A673 (cell line): ENCODE measurements at regions of chr7 and their contacts with region 1.

Region 1: GRCh38 chr7:107387128-107387527 is 82.7 kb upstream of the GPR22 start:
- DNase-seq: no peak
- H3K4me3 ChIP-seq: no peak overlapping the region
- H3K27ac ChIP-seq: no peak overlapping the region
- H3K4me1 ChIP-seq: no peaks in the 10 kb centered on the region
- H3K27me3 ChIP-seq: no peaks in the 10 kb centered on the region
- CTCF ChIP-seq: no peak

Region 2: GRCh38 chr7:107372298-107372697 is 14.8 kb before region 1 on chr7:
- CTCF ChIA-PET with region 1: no interaction called
- POLR2A ChIA-PET with region 1: no interaction called
- intact Hi-C with region 1: loop called (anchors 1 kb)
- DNase-seq: no peak
- H3K4me3 ChIP-seq: no peak overlapping the region
- H3K27ac ChIP-seq: no peak overlapping the region
- H3K4me1 ChIP-seq: no peaks in the 10 kb centered on the region
- H3K27me3 ChIP-seq: no peaks in the 10 kb centered on the region
- CTCF ChIP-seq: no peak

Region 3: DNA sequence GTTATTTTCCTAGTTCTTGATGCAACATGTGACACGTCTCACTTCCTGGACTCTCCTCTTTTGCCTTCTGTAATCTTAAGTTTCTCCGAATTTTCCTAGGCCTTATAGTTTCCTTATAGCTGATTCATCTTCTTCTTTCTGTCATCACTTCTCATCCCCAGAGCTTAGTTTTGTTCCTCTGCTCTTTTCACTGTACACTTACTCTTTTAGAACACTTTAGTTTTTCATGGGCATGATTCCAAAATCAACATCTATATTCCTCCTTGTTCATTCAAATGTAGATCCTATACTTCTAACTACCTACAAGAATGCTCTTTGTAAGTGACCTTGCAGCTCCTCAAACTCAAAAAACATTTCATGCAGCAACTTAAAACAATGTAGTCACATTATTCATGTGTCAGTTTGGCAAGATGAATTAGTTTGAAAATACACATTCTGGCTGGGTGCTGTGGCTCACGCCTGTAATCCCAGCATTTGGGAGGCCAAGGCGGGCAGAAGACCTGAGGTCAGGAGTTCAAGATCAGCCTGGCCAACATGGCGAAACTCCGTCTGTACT is 429.0 kb after region 1 on chr7:
- CTCF ChIA-PET with region 1: no interaction called
- POLR2A ChIA-PET with region 1: interaction called, 10 read pairs
- intact Hi-C with region 1: no loop called
- DNase-seq: no peak
- H3K4me3 ChIP-seq: no peak overlapping the region
- H3K27ac ChIP-seq: no peak overlapping the region
- H3K4me1 ChIP-seq: no peaks in the 10 kb centered on the region
- H3K27me3 ChIP-seq: peaks cover 5% of the 10 kb centered on the region
- CTCF ChIP-seq: no peak

Region 4: GRCh38 chr7:108324053-108325038 is 937.2 kb after region 1 on chr7:
- CTCF ChIA-PET with region 1: no interaction called
- POLR2A ChIA-PET with region 1: no interaction called
- intact Hi-C with region 1: no loop called
- DNase-seq: no peak
- H3K4me3 ChIP-seq: no peak overlapping the region
- H3K27ac ChIP-seq: no peak overlapping the region
- H3K4me1 ChIP-seq: peaks cover 59% of the 10 kb centered on the region
- H3K27me3 ChIP-seq: no peaks in the 10 kb centered on the region
- CTCF ChIP-seq: no peak